Activated naive CD4-positive, alpha-beta T cell treated with anti-CD3 and anti-CD28 coated beads, Interleukin-2, amount 10 ng/mL, durations not matched to agents 7 days and 5 days (primary cell): ENCODE measurements at regions of chr20 and their contacts with region 1.

Region 1: GRCh38 chr20:3767427-3768341 is at the start of gene ADISSP:
- DNase-seq: peak; percentile 98
- H3K4me3 Mint-ChIP-seq: peak within 1 kb of the TSS; percentile 85
- H3K27ac Mint-ChIP-seq: peak within 1 kb of the TSS; percentile 93
- H3K4me1 Mint-ChIP-seq: peaks cover 30% of the 10 kb centered on the region
- H3K27me3 Mint-ChIP-seq: peaks cover 17% of the 10 kb centered on the region

Region 2: GRCh38 chr20:3753098-3753980 is 14.3 kb before region 1 on chr20:
- CTCF ChIA-PET with region 1: interaction called, 30 read pairs
- DNase-seq: peak; percentile 76
- H3K4me3 Mint-ChIP-seq: no peak overlapping the region
- H3K27ac Mint-ChIP-seq: no peak overlapping the region
- H3K4me1 Mint-ChIP-seq: peaks cover 15% of the 10 kb centered on the region
- H3K27me3 Mint-ChIP-seq: peaks cover 16% of the 10 kb centered on the region

Region 3: DNA sequence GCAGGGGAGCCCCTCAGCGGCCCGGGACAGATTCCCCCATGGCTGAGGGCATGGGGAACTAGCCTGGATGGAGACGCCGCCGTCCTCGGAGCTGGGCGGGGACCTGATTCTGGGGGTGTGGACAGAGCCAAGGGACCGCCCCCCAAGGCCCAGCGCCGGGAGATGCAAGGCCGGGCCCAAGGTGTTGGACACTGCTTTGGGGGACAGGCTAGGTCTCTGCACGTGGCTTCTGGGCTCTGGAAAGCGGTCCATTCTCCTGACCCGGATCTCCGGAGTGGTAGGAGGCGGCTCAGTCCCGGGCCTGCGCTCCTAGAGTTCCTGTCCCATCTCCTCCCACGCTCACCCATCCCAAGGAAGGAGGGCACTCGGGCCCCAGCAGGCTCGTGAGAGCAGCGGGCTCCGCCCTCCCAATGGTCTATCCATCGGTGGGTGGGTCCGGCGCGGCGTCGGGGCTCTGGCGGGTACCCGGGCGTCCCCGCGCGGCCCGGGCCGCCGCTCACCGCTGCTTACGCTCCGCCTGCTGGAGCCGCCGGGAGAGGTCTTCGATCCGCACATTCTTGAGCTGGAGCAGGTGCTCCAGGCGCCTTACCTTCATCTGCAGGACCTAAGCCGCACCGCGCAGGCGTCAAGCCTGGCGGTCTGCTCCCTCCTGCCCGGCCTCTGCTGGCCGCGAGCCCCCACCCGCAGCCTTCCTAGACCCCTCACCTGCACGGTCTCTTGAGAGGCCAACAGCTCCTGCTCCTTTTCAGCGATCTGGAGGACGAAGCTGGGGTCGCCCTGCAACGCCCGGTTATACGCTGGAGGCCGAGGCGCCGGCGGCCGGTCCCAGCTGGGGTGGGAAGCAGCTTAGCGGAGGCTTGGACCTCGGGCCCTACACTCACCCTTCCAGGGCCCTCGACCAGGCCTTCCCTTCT is 10.3 kb after region 1 on chr20:
- CTCF ChIA-PET with region 1: interaction called, 10 read pairs
- DNase-seq: peak; percentile 53
- H3K4me3 Mint-ChIP-seq: peak overlapping the region; percentile 67
- H3K27ac Mint-ChIP-seq: no peak overlapping the region
- H3K4me1 Mint-ChIP-seq: peaks cover 43% of the 10 kb centered on the region
- H3K27me3 Mint-ChIP-seq: peaks cover 69% of the 10 kb centered on the region